GM10248 (cell line): ENCODE measurements at regions of chr6 and their contacts with region 1.

Region 1: GRCh38 chr6:6399568-6399967 is 79.1 kb upstream of the F13A1 start:
- DNase-seq: no peak
- CTCF ChIP-seq: no peak

Region 2: DNA sequence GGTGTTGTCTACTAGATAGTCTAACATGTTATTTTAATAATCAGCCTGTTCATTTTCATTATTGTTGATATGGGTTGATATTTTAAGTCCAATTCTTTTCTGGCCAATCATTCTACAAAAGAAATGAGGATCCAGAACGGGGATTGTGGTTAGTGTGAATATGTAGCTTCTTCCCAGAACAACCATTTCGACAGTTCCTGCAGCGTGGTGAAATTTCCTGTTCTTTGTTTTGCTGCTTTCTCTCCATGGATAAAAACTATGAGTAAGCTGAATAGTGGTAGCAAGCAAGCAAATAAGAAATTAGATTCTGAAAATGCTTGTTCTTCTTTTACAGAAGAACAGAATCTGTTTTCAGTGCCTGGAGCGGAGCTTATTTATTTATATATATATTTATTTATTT is 13.6 kb before region 1 on chr6:
- CTCF ChIA-PET with region 1: interaction called, 10 read pairs
- POLR2A ChIA-PET with region 1: no interaction called
- DNase-seq: no peak
- CTCF ChIP-seq: no peak